PC-3 (cell line): ENCODE measurements at regions of chr10 and their contacts with region 1.

Region 1: DNA sequence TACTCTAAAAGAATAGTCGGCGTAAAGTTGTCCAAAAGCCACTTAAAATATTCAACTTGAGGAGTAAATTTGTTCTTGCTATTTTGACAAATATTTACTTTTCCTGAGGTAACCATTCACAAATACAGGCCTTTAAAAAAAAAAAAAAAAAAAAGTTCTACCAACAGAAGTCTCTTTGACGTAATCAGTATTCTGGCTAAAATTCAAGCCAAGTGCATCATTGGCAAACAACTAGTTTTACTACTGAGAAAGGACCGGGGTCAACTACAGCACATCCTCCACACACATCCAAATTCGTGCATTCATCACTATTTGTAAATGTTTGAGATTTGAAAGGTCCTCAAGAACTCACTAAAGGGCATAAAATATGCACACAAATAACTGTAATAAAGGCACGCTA is 2.0 kb downstream of the OAT start:
- DNase-seq: peak; percentile 83
- ATAC-seq: 0 out of 2 replicates have a peak, but pooled peaks have one; percentile 4
- H3K4me3 ChIP-seq: peak overlapping the region; percentile 92
- H3K27ac ChIP-seq: peak overlapping the region; percentile 50
- H3K4me1 ChIP-seq: peaks cover 14% of the 10 kb centered on the region
- H3K27me3 ChIP-seq: no peaks in the 10 kb centered on the region
- CTCF ChIP-seq: no peak

Region 2: DNA sequence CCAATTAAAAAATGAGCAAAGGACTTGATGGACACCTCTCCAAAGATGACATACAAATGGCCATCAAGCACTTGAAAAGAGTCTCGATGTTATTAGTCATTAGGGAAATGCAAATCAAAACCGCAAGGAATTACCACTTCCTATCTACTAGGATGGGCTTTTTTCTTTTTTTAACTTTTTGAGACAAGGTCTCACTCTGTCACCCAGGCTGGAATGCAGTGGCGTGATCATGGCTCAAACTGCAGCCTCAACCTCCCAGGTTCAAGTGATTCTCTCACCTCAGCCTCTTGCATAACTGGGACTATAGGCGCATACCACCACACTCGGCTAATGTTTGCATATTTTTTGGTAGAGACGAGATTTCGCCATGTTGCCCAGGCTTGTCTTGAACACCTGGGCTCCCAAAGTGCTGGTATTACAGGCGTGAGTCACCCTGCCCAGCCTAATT is 19.5 kb after region 1 on chr10:
- CTCF ChIA-PET with region 1: interaction called, 10 read pairs
- POLR2A ChIA-PET with region 1: no interaction called
- intact Hi-C with region 1: no loop called
- DNase-seq: no peak
- ATAC-seq: no peak
- H3K4me3 ChIP-seq: no peak overlapping the region
- H3K27ac ChIP-seq: no peak overlapping the region
- H3K4me1 ChIP-seq: peaks cover 8% of the 10 kb centered on the region; the same call in 1 of the 2 replicates
- H3K27me3 ChIP-seq: no peaks in the 10 kb centered on the region
- CTCF ChIP-seq: no peak

Region 3: DNA sequence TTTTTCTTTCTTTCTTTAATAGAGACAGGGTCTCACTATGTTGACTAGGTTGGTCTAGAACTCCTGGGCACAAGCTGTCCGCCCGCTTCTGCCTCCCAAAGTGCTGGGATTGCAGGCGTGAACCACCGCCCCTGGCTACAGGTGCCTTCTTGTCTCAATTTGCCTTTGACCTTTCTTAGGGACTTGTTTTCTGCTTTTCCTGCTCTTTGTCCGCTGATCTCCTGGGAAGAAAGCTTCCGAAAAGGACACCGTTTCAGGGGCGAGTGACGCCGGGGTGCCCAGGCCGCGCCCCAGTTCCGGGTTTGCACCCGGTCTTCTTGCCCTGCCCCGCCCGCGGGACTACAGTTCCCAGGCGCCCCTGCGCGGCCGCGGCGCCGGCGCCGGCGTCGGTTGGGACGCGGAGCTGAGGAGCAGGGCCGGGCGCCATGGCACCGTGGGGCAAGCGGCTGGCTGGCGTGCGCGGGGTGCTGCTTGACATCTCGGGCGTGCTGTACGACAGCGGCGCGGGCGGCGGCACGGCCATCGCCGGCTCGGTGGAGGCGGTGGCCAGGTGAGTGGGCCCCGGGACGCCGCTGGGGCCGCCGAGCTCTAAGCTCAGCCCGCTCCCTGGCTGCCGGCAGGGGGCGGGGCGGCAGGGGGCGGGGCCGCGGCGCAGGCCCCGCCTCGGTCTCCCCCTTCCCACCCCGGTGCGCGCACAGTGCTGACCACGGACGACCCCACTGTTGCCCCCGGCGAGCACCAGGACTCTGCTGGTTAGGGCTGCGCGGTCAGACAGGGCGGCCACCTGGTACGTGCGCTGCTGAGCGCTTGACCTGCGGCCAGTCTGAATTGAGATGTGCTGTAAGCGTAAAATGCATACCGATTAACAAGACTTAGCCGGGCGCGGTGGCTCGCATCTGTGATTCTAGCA is 45.0 kb after region 1 on chr10 and contains the start of gene LHPP:
- CTCF ChIA-PET with region 1: no interaction called
- POLR2A ChIA-PET with region 1: no interaction called
- intact Hi-C with region 1: loop called (anchors 1 kb)
- DNase-seq: peak; percentile 73
- ATAC-seq: peak; percentile 99
- H3K4me3 ChIP-seq: peak within 1 kb of the TSS; percentile 86
- H3K27ac ChIP-seq: no peak within 1 kb of the TSS
- H3K4me1 ChIP-seq: no peaks in the 10 kb centered on the region
- H3K27me3 ChIP-seq: no peaks in the 10 kb centered on the region
- CTCF ChIP-seq: no peak
- total RNA-seq, gene LHPP: 6.6 and 13.5 TPM in 2 replicates

Region 4: DNA sequence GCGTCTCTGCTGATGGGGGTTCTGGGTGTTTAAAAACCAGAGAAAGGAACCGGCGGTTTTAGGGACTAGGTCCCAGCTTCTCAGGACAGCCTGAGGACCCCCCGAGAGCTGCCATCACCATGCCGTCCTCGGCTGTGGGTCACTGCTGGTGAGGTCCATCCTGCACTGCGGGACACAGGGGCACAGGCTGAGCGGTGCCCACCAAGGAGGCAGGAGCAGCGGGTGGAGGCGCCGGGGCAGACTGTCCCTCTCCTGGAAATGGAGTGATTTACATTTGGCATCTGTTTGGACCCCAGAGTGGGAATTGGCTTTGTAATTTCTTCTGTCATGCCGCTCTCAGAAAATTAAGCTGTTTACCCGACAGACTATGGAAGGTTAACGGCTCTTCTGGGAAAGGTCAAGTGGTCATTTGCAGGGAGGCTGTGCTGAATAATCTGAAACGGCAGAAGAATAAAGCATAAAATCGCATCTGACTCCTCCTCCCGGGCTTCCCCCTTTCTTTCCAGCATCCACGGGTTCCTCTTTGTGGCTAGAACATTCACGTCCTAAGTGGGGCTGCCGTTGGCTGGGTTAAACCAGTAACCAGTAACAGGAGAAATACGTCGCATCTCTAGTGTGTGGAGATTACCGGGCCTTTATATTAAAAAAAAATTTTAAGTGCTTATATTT is 76.6 kb after region 1 on chr10:
- CTCF ChIA-PET with region 1: no interaction called
- POLR2A ChIA-PET with region 1: no interaction called
- intact Hi-C with region 1: no loop called
- DNase-seq: no peak
- ATAC-seq: no peak
- H3K4me3 ChIP-seq: no peak overlapping the region
- H3K27ac ChIP-seq: no peak overlapping the region
- H3K4me1 ChIP-seq: no peaks in the 10 kb centered on the region
- H3K27me3 ChIP-seq: no peaks in the 10 kb centered on the region
- CTCF ChIP-seq: no peak